ENCODE measurements at regions of chr17 and their contacts with region 1.

Region 1: DNA sequence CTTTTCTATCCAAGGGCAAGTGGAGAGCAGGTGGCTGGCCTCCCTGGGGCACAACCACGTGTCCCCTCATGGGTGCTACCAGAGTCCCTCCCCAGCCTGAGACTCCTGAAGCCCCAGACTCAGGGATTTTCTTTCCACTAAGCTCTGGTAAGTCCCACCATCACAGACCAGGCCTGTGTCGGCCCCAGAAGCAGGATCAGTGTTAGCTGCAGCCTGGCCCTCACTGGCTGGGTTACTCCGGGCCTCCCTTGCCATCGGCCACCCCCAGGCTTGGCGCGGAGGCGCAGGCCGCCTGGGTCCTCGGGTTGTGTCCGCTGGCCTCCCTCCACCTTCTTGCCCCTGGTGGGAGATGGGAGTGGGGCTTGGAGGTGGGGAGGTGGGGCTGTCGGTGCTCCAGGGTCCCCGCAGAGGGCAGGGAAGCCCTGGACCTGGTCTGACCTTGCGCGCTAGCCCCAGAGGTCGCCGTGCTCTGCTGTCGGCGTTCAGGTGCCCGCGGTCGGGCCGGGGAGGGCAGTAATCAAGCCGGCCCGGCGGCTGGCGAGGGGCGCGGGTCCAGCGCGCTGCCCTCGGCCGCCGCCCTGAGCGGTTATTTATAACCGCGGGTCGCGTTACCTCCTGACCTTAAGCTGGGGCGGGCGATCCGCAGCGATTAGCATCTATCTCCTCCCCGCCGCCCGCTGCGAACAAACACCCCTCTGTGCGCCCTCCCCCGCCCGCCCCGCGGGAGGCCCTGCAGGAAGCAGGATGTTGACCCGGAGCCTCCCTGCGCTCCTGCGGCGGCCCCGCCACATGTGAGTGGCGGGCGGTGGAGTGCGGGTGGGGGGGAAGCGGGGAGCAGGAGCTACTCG is 78.1 kb upstream of the TOB1 start:
- DNase-seq: peak; percentile 76
- H3K4me3 Mint-ChIP-seq: peak overlapping the region; percentile 79
- H3K27ac Mint-ChIP-seq: peak overlapping the region; percentile 75
- H3K4me1 Mint-ChIP-seq: peaks cover 30% of the 10 kb centered on the region
- H3K27me3 Mint-ChIP-seq: peaks cover 2% of the 10 kb centered on the region

Region 2: GRCh38 chr17:50783193-50783660 is 161.1 kb before region 1 on chr17:
- intact Hi-C with region 1: loop called (anchors 5 kb)
- DNase-seq: peak; percentile 68
- H3K4me3 Mint-ChIP-seq: no peak overlapping the region
- H3K27ac Mint-ChIP-seq: no peak overlapping the region
- H3K4me1 Mint-ChIP-seq: peaks cover 27% of the 10 kb centered on the region
- H3K27me3 Mint-ChIP-seq: peaks cover 32% of the 10 kb centered on the region

Region 3: GRCh38 chr17:50904521-50905459 is 39.5 kb before region 1 on chr17:
- intact Hi-C with region 1: loop called (anchors 5 kb)
- DNase-seq: no peak
- H3K4me3 Mint-ChIP-seq: no peak overlapping the region
- H3K27ac Mint-ChIP-seq: no peak overlapping the region
- H3K4me1 Mint-ChIP-seq: peaks cover 41% of the 10 kb centered on the region
- H3K27me3 Mint-ChIP-seq: no peaks in the 10 kb centered on the region

Region 4: GRCh38 chr17:50919321-50920085 is 24.8 kb before region 1 on chr17:
- intact Hi-C with region 1: loop called (anchors 1 kb)
- DNase-seq: peak; percentile 81
- H3K4me3 Mint-ChIP-seq: peak overlapping the region; percentile 49
- H3K27ac Mint-ChIP-seq: peak overlapping the region; percentile 98
- H3K4me1 Mint-ChIP-seq: peaks cover 27% of the 10 kb centered on the region
- H3K27me3 Mint-ChIP-seq: peaks cover 3% of the 10 kb centered on the region

Region 5: DNA sequence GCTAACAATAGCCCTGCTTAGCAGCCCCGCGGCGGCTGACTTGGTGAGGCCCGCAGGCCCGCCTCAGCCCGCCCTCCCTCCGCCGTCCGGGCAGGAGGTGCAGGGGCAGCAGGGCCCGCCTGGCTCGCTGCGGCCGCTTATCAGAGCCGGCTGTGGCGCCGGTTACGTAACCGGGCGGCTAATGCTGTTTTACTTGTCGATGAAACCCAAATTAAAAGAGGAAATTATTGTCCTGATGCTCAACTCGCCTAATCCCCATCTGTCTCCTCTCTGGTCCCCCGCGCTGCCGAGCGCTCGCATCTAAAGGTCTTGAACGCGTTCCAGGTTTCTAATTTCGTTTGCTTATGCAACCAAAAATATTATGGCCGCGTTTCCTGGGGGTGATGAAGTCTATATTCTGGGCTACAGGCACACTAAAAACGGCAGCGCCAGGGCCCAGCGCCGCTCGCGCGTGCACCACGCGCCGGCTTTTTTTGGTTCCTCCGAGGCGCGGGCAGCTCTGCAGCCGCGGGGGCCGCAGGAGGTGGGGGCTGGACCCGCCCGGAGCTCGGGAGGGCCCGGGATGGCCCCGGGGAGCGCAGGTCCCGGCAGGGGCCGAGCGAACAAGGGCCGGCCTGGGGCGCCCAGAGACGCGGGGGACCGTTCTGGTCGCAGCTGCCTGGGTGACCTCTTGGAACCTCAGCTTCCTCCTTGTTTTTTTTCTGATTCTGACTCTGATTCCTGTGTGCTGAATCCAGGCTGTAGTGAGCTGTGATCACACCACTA is 13.0 kb before region 1 on chr17:
- intact Hi-C with region 1: loop called (anchors 1 kb)
- DNase-seq: peak; percentile 17
- H3K4me3 Mint-ChIP-seq: peak overlapping the region; percentile 63
- H3K27ac Mint-ChIP-seq: peak overlapping the region; percentile 43
- H3K4me1 Mint-ChIP-seq: peaks cover 17% of the 10 kb centered on the region
- H3K27me3 Mint-ChIP-seq: peaks cover 25% of the 10 kb centered on the region

Region 6: DNA sequence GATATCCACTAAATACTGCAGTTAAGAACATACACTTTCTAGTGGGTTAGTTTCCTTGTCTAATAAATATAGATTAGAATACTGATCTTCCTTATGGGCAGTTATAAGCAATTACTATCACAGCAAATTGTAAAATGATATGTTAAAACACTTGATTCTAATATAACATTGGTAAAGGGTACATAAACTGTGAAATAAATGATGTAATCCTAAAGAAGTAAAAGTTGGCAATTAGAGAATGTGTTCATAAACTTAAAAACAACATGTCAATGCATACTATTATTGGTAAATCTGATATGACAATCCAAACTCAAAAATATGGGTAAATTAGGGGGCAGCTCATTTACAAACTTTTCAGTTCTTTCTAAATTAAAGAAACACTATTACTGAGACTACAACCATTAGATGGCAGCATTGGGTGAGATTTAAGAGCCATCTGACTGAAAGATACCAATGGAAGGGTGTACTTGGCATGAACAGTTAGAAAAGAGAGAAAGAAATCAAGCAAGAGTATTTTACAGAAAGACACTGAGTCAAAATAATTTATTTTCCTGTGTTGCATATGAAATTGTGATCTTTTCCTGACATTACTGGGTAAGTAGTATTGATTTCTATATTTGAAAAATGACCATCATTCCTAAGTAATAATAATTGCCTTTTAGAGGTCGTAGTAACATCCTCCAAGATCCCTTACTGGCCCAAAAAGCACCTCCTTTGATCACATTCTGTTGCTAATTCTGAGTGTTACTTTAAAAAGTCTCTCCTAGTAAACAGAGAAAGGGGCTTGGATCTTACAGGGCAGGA is 56.8 kb after region 1 on chr17:
- intact Hi-C with region 1: no loop called
- DNase-seq: no peak
- H3K4me3 Mint-ChIP-seq: no peak overlapping the region
- H3K27ac Mint-ChIP-seq: no peak overlapping the region
- H3K4me1 Mint-ChIP-seq: peaks cover 7% of the 10 kb centered on the region
- H3K27me3 Mint-ChIP-seq: no peaks in the 10 kb centered on the region

Measured in activated T-helper 1 cell treated with anti-CD3 and anti-CD28 coated beads, Interleukin-12 subunit alpha, Interleukin-12 subunit beta, Interleukin-2, Interleukin-4 antibody, amounts not matched to agents 30 ng/mL and 10 ng/mL and 1 ng/mL, durations not matched to agents 14 hours and 24 hours and 36 hours (primary cell).